CD4-positive, alpha-beta T cell (primary cell): ENCODE measurements at regions of chr17 and their contacts with region 1.

Region 1: GRCh38 chr17:39057701-39058206 is 90.6 kb upstream of the FBXO47 start:
- DNase-seq: no peak
- ATAC-seq: no peak
- H3K4me3 ChIP-seq: no peak overlapping the region
- H3K4me3 Mint-ChIP-seq: peak overlapping the region; percentile 60
- H3K27ac ChIP-seq: no peak overlapping the region
- H3K27ac Mint-ChIP-seq: peak overlapping the region; percentile 81
- H3K4me1 ChIP-seq: peaks cover 12% of the 10 kb centered on the region
- H3K4me1 Mint-ChIP-seq: peaks cover 14% of the 10 kb centered on the region
- H3K27me3 ChIP-seq: no peaks in the 10 kb centered on the region
- H3K27me3 Mint-ChIP-seq: no peaks in the 10 kb centered on the region
- CTCF ChIP-seq: no peak

Region 2: GRCh38 chr17:38761612-38762011 is 296.1 kb before region 1 on chr17:
- CTCF ChIA-PET with region 1: no interaction called
- POLR2A ChIA-PET with region 1: no interaction called
- intact Hi-C with region 1: no loop called
- DNase-seq: peak in 5 of 14 experiments; percentile 22 to 59 (median 35)
- ATAC-seq: peak; percentile 48
- H3K4me3 ChIP-seq: no peak overlapping the region
- H3K4me3 Mint-ChIP-seq: no peak overlapping the region
- H3K27ac ChIP-seq: no peak overlapping the region
- H3K27ac Mint-ChIP-seq: peak overlapping the region; percentile 21
- H3K4me1 ChIP-seq: peaks cover 11% of the 10 kb centered on the region
- H3K4me1 Mint-ChIP-seq: peaks cover 4% of the 10 kb centered on the region
- H3K27me3 ChIP-seq: no peaks in the 10 kb centered on the region
- H3K27me3 Mint-ChIP-seq: no peaks in the 10 kb centered on the region
- CTCF ChIP-seq: peak; percentile 17

Region 3: GRCh38 chr17:39018267-39019134 is 39.3 kb before region 1 on chr17:
- CTCF ChIA-PET with region 1: no interaction called
- POLR2A ChIA-PET with region 1: interaction called, 15 read pairs
- intact Hi-C with region 1: no loop called
- DNase-seq: peak in 4 of 14 experiments; percentile 15 to 34 (median 24)
- ATAC-seq: peak; percentile 28
- H3K4me3 ChIP-seq: no peak overlapping the region
- H3K4me3 Mint-ChIP-seq: peak overlapping the region; percentile 11
- H3K27ac ChIP-seq: peak overlapping the region; percentile 23 to 37
- H3K27ac Mint-ChIP-seq: peak overlapping the region; percentile 92
- H3K4me1 ChIP-seq: peaks cover 31% of the 10 kb centered on the region
- H3K4me1 Mint-ChIP-seq: peaks cover 33% of the 10 kb centered on the region
- H3K27me3 ChIP-seq: no peaks in the 10 kb centered on the region
- H3K27me3 Mint-ChIP-seq: no peaks in the 10 kb centered on the region
- CTCF ChIP-seq: no peak

Region 4: GRCh38 chr17:39099663-39100286 is 42.0 kb after region 1 on chr17:
- CTCF ChIA-PET with region 1: no interaction called
- POLR2A ChIA-PET with region 1: no interaction called
- intact Hi-C with region 1: loop called in 1 of 2 experiments (anchors 5 kb)
- DNase-seq: no peak
- ATAC-seq: no peak
- H3K4me3 ChIP-seq: no peak overlapping the region
- H3K4me3 Mint-ChIP-seq: no peak overlapping the region
- H3K27ac ChIP-seq: no peak overlapping the region
- H3K27ac Mint-ChIP-seq: peak overlapping the region; percentile 83
- H3K4me1 ChIP-seq: peaks cover 65% of the 10 kb centered on the region
- H3K4me1 Mint-ChIP-seq: peaks cover 77% of the 10 kb centered on the region
- H3K27me3 ChIP-seq: no peaks in the 10 kb centered on the region
- H3K27me3 Mint-ChIP-seq: no peaks in the 10 kb centered on the region
- CTCF ChIP-seq: no peak

Region 5: DNA sequence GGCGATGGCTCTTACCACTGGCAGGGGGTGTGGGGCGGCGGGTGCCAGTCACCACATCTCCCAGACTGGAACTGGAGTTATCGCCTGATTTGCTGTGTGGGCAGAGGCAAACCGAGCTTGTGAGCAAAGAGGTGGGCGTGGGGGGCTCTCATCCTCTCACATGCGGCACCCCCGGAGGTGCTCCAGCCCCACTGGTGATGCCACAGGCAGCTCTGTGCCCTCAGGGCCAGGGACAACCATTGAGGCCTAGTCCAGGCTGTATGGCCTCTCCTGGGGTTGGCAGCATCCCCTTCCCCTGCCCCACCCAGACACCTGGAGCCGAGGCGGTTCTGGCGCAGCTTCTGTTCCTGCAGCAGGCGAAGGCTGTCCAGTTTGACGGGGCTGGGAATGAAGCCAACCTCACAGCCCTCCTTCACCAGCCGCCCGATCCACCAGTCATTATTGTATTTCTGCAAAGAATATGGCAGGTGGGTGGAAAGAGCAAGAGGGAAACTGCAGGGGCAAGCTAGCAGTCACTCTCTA is 128.8 kb after region 1 on chr17:
- CTCF ChIA-PET with region 1: no interaction called
- POLR2A ChIA-PET with region 1: no interaction called
- intact Hi-C with region 1: no loop called
- DNase-seq: no peak
- ATAC-seq: no peak
- H3K4me3 ChIP-seq: no peak overlapping the region
- H3K4me3 Mint-ChIP-seq: no peak overlapping the region
- H3K27ac ChIP-seq: no peak overlapping the region
- H3K27ac Mint-ChIP-seq: no peak overlapping the region
- H3K4me1 ChIP-seq: no peaks in the 10 kb centered on the region
- H3K4me1 Mint-ChIP-seq: no peaks in the 10 kb centered on the region
- H3K27me3 ChIP-seq: no peaks in the 10 kb centered on the region
- H3K27me3 Mint-ChIP-seq: no peaks in the 10 kb centered on the region
- CTCF ChIP-seq: no peak